SK-N-SH (cell line): ENCODE measurements at regions of chr12 and their contacts with region 1.

Region 1: DNA sequence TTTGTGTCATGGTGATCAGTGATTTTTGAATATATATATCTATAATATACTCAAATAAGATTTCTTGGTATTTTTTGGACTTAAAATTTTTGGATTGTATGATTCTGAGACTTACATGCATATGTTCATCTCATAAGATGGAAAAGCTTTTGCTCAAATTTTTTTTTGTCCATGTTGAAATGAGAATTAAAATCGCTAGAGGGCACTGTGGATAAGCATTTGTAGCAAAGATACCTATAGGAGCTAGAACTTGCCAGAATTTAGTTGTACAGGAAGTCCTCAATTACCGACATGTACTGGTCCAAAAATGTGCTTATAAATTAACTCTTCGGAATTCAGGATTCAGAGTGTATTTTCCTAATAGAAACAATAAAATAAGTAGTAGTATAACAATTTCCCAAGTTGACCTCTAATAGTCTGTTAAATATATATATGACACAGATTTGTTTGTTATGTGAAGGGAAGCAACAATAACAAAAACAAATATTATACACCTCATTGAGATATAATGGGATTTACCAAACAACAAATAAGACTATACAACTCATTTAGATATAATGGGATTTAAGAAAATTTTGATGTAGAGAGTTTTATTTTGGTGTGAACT is 179.6 kb downstream of the TMEM117 start:
- DNase-seq: peak; percentile 23
- H3K4me3 ChIP-seq: no peak overlapping the region
- H3K27ac ChIP-seq: no peak overlapping the region
- H3K4me1 ChIP-seq: peaks cover 0 to 2% of the 10 kb centered on the region in 2 experiments; a peak in 3 of 4 replicates
- H3K27me3 ChIP-seq: no peaks in the 10 kb centered on the region
- CTCF ChIP-seq: peak; percentile 73
- EP300 ChIP-seq: no peak
- RAD21 ChIP-seq: peak; percentile 88

Region 2: GRCh38 chr12:43914923-43915468 is 100.4 kb before region 1 on chr12:
- CTCF ChIA-PET with region 1: no interaction called
- POLR2A ChIA-PET with region 1: no interaction called
- DNase-seq: no peak
- H3K4me3 ChIP-seq: no peak overlapping the region
- H3K27ac ChIP-seq: no peak overlapping the region
- H3K4me1 ChIP-seq: no peaks in the 10 kb centered on the region; a peak in 1 of 4 replicates
- H3K27me3 ChIP-seq: no peaks in the 10 kb centered on the region
- CTCF ChIP-seq: peak; percentile 38
- EP300 ChIP-seq: no peak
- RAD21 ChIP-seq: peak; percentile 42

Region 3: DNA sequence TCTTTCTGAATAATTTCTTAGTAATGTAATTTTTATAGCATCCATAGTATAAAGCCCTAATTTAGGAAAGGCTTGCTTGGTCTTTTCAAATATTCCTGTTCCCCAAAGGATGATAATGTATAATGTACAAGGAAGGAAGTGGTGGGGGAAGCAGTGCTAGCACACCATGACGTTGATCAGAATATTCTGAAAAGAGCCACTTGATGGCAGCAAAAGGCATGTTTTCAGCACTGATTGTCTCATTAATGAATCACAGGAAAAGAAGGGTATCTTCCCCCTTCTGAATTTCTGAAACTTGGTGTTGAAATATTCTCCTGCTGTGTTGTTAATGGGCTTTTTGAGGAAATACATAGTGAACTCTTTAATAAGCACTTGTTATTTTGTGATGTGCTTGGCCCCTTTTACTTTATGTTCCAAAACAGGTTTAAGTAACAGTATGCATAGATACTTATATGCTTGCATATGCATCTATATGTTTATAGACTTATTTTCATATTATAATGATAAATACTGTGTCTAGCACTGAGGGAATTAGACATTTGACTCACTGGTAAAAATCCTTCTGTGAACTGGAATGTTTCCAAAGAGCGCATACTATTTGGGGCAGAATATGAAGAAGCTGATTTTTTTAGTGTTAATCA is 57.6 kb before region 1 on chr12:
- CTCF ChIA-PET with region 1: interaction called, 10 read pairs
- POLR2A ChIA-PET with region 1: no interaction called
- DNase-seq: peak; percentile 52
- H3K4me3 ChIP-seq: no peak overlapping the region; a peak in 1 of 4 replicates
- H3K27ac ChIP-seq: no peak overlapping the region
- H3K4me1 ChIP-seq: peaks cover 0 to 6% of the 10 kb centered on the region in 2 experiments; a peak in 1 of 4 replicates
- H3K27me3 ChIP-seq: no peaks in the 10 kb centered on the region
- CTCF ChIP-seq: peak; percentile 69
- EP300 ChIP-seq: no peak
- RAD21 ChIP-seq: peak; percentile 86

Region 4: GRCh38 chr12:44000309-44000952 is 15.0 kb before region 1 on chr12:
- CTCF ChIA-PET with region 1: interaction called, 18 read pairs
- POLR2A ChIA-PET with region 1: no interaction called
- DNase-seq: peak; percentile 11
- H3K4me3 ChIP-seq: no peak overlapping the region
- H3K27ac ChIP-seq: no peak overlapping the region
- H3K4me1 ChIP-seq: no peaks in the 10 kb centered on the region; a peak in 1 of 4 replicates
- H3K27me3 ChIP-seq: no peaks in the 10 kb centered on the region
- CTCF ChIP-seq: peak; percentile 59
- EP300 ChIP-seq: no peak
- RAD21 ChIP-seq: peak; percentile 42

Region 5: DNA sequence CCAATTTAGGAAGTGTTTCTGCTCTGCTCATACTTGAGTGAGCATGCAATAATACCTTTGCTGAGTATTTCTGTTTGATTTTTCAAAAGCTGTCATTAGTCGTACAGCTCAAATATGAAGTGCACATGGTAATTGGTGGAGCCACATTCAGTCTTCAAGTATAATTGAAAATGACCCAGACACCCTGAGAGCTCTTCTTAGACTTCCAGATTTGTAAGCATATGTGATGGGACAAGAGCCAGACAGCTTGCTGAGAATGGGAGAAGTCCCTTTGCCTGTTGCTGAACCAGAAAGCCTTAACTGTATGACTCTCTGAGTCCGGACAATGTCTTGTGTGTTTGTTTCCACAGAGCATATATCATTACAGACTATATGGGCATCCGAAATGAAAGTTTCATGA is 127.7 kb after region 1 on chr12:
- CTCF ChIA-PET with region 1: no interaction called
- POLR2A ChIA-PET with region 1: no interaction called
- DNase-seq: no peak
- H3K4me3 ChIP-seq: no peak overlapping the region
- H3K27ac ChIP-seq: no peak overlapping the region
- H3K4me1 ChIP-seq: no peaks in the 10 kb centered on the region
- H3K27me3 ChIP-seq: no peaks in the 10 kb centered on the region
- CTCF ChIP-seq: no peak
- EP300 ChIP-seq: no peak
- RAD21 ChIP-seq: no peak

Region 6: DNA sequence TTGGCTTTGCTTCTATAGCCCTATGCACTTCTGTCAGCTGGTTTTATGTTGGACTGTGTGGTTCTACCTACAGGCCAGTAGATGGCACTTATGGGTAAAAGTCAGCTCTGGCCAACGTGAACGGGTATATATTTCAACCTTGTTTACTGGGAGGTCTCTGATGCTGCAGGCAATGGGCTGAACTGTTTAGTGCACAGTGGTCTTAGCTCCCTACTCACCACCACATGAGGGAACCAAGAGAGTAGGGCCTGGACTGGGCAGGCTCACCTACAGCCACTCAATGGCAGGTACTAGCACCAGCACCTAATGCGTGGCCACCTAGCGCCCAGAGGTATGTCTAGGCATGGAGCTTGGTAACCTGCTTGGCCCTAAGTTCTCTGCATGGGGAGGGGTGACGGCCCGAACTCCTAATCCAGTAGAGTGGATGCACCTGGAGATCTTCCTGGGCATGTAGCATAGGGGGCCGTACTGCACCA is 302.3 kb after region 1 on chr12:
- CTCF ChIA-PET with region 1: interaction called, 10 read pairs
- POLR2A ChIA-PET with region 1: no interaction called
- DNase-seq: peak; percentile 25
- H3K4me3 ChIP-seq: no peak overlapping the region; a peak in 1 of 4 replicates
- H3K27ac ChIP-seq: no peak overlapping the region
- H3K4me1 ChIP-seq: peaks cover 0 to 6% of the 10 kb centered on the region in 2 experiments; a peak in 2 of 4 replicates
- H3K27me3 ChIP-seq: no peaks in the 10 kb centered on the region
- CTCF ChIP-seq: peak; percentile 51
- EP300 ChIP-seq: no peak
- RAD21 ChIP-seq: peak; percentile 78

Region 7: DNA sequence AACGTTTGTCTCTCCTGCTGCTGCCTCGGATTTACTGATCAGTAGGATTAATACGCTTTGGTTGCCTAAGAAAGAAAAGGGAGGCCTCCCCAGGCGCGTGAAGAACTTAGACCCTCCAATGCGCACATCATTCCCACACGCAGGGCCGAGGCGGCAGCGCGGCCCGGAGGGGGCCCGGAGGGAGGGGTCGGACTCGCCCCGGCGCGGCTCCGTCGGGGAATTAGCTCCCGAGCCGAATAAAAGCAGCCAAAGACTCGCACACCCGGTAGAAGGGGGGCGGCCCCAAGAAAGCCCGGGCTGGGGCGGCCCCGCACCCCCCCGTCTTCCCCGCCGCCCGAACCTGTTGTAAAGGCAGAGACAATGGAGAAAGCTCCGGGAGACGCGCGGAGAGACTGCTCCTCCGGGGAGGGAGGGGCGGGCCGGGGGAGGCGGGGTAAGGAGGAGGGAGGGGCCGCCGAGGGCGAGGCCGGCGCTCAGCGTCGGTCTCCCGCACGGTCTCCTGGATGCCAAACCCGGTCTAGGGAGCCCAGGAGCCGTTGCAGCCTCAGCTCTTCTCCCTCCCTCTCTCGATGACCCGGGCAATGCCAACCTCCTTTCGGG is 860.6 kb after region 1 on chr12 and contains the start of gene NELL2:
- CTCF ChIA-PET with region 1: interaction called, 53 read pairs
- POLR2A ChIA-PET with region 1: no interaction called
- DNase-seq: peak; percentile 83
- H3K4me3 ChIP-seq: peak within 1 kb of the TSS; percentile 47 to 60
- H3K27ac ChIP-seq: no peak within 1 kb of the TSS
- H3K4me1 ChIP-seq: peaks cover 4 to 16% of the 10 kb centered on the region in 2 experiments; a peak in 1 of 4 replicates
- H3K27me3 ChIP-seq: peaks cover 22% of the 10 kb centered on the region; the same call in 1 of the 2 replicates
- CTCF ChIP-seq: no peak
- EP300 ChIP-seq: no peak
- RAD21 ChIP-seq: no peak
- polyA plus RNA-seq, gene NELL2: 0.28 and 0.35 TPM in 2 replicates

Region 8: DNA sequence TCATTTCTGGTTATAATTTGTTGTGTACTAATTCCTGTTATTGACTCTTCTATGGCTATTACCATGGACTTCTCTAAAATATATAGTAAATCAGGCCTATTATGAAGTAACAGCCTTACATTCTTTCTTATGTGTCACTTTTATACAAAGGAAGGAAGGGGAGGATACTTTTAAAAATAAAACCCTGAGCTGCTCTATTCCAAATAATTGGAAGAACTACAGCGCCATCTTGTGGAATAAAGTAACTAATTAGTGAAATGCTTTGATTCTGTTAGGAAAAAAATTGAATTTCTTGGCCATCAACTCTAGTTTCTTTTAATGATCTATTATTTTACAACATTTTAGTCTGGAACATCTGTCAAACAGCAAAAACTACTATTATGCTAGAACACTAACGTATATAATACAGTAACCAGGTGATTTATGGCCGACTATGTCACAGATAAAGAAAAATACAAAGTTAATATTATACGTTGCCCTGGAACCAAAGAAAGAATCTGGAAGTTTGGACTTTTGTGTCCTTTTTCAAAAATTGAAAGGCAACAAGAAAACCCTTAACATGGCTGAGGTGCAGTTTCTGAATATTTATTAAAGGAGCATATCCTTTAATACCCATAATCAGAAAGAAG is 915.6 kb after region 1 on chr12:
- CTCF ChIA-PET with region 1: interaction called, 53 read pairs
- POLR2A ChIA-PET with region 1: no interaction called
- DNase-seq: peak; percentile 34
- H3K4me3 ChIP-seq: no peak overlapping the region
- H3K27ac ChIP-seq: no peak overlapping the region
- H3K4me1 ChIP-seq: peaks cover 0 to 15% of the 10 kb centered on the region in 2 experiments; a peak in 1 of 4 replicates
- H3K27me3 ChIP-seq: no peaks in the 10 kb centered on the region
- CTCF ChIP-seq: peak; percentile 79
- EP300 ChIP-seq: no peak
- RAD21 ChIP-seq: peak; percentile 87

Region 9: DNA sequence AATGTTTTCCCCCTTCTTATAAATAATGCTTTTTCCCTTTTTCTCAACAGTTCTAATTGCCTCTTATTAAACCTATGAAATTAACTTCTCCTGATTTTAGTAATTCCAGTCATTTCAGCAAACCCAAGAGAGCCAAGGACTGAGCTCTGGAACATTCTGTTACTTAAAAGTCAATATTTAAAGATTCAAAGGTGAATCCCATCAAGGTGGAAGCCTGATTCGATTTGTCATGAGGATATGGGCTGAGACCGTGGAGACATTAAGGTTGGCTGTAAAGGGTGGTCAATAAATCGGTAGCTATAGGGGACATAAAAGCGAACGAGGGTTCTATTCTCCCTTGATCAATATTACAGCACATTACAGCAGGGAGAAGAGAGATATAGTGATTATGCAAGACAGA is 927.3 kb after region 1 on chr12:
- CTCF ChIA-PET with region 1: interaction called, 25 read pairs
- POLR2A ChIA-PET with region 1: no interaction called
- DNase-seq: no peak
- H3K4me3 ChIP-seq: no peak overlapping the region
- H3K27ac ChIP-seq: no peak overlapping the region
- H3K4me1 ChIP-seq: no peaks in the 10 kb centered on the region
- H3K27me3 ChIP-seq: no peaks in the 10 kb centered on the region
- CTCF ChIP-seq: no peak
- EP300 ChIP-seq: no peak
- RAD21 ChIP-seq: no peak